ENCODE measurements at regions of chr1 and their contacts with region 1.

Region 1: GRCh38 chr1:161864577-161864976 is 98.5 kb downstream of the ATF6 start:
- DNase-seq: peak in 4 of 14 experiments; percentile 11 to 32 (median 25)
- ATAC-seq: peak; percentile 37
- H3K4me3 ChIP-seq: no peak overlapping the region
- H3K4me3 Mint-ChIP-seq: no peak overlapping the region
- H3K27ac ChIP-seq: no peak overlapping the region
- H3K27ac Mint-ChIP-seq: no peak overlapping the region
- H3K4me1 ChIP-seq: no peaks in the 10 kb centered on the region
- H3K4me1 Mint-ChIP-seq: peaks cover 6% of the 10 kb centered on the region
- H3K27me3 ChIP-seq: no peaks in the 10 kb centered on the region
- H3K27me3 Mint-ChIP-seq: no peaks in the 10 kb centered on the region
- CTCF ChIP-seq: peak; percentile 25

Region 2: DNA sequence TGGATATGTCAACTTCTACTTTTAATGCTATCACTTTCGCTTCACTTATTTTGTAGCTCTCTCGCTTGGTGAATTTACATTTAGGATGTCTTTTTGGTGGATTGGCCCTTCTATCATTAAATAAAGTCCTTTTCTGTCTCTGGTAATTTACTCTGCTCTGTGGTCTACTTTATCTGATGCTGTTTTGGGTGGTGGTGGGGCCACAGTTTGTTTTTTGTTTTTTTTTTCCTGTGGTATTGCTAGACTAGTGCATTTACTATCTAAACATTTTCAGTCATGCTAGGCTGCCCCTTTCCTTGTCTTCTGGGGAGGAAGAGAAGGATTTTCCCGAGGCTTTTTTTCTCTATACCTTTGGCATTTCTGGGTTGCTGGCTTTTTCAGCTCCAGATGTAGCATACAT is 175.6 kb before region 1 on chr1:
- CTCF ChIA-PET with region 1: no interaction called
- POLR2A ChIA-PET with region 1: no interaction called
- intact Hi-C with region 1: no loop called
- DNase-seq: no peak
- ATAC-seq: no peak
- H3K4me3 ChIP-seq: no peak overlapping the region
- H3K4me3 Mint-ChIP-seq: no peak overlapping the region
- H3K27ac ChIP-seq: no peak overlapping the region
- H3K27ac Mint-ChIP-seq: no peak overlapping the region
- H3K4me1 ChIP-seq: no peaks in the 10 kb centered on the region
- H3K4me1 Mint-ChIP-seq: no peaks in the 10 kb centered on the region
- H3K27me3 ChIP-seq: peaks cover 12 to 18% of the 10 kb centered on the region in 2 experiments
- H3K27me3 Mint-ChIP-seq: peaks cover 34% of the 10 kb centered on the region
- CTCF ChIP-seq: no peak

Region 3: DNA sequence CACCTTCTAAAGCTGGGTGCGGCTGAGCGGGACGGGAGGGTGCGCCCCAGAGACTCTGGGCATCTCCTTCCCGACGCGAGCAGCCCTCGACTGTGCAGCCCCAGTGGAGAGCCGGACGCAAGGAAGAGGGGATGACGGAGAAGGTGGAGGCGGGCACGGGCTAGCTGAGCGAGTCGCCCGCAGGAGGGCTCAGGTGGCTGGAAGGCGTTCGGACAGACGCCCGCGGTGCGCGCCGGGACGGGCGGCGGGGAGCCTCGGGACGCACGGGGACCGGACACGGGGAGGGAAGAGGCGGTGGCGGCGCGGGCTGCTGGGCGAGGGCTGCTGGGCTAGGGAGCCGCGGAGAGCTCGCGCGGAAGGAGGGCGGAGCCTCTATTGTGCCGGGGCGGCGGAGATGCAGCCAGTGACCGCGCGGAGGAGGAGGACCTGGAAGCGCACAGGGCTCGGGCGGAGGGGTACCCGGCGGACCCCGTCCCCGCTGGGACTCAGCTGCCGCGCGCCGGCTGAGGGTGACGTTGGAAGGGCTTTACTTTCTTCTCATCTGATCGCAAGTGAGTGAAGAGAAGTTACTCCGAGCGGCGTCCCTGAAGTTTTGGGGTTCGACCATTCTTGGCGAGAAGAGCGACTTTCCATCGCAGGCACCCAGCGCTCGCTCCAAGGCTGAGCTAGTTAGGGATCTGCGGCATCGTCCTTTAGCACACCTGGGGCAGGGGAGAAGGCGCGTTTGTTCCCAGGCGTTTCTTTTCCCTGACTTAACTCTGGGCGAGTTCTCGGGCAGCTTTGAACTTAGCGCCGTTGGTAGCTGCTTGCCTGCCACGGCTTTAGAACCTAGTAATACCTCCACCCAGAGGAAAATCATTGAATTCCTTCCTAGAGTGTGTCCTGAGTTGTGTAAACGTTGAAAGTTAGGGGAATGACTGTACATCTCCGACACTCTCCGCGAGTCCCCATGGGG is 159.2 kb after region 1 on chr1 and contains the start of gene OLFML2B:
- CTCF ChIA-PET with region 1: no interaction called
- POLR2A ChIA-PET with region 1: interaction called, 10 read pairs
- intact Hi-C with region 1: loop called in 1 of 2 experiments (anchors 1 kb)
- DNase-seq: peak in 13 of 14 experiments; percentile 14 to 63 (median 38)
- ATAC-seq: peak; percentile 89
- H3K4me3 ChIP-seq: peak within 1 kb of the TSS; percentile 68
- H3K4me3 Mint-ChIP-seq: peak within 1 kb of the TSS; percentile 95
- H3K27ac ChIP-seq: no peak within 1 kb of the TSS
- H3K27ac Mint-ChIP-seq: no peak within 1 kb of the TSS
- H3K4me1 ChIP-seq: peaks cover 13% of the 10 kb centered on the region
- H3K4me1 Mint-ChIP-seq: peaks cover 7% of the 10 kb centered on the region
- H3K27me3 ChIP-seq: peaks cover 7 to 22% of the 10 kb centered on the region in 2 experiments
- H3K27me3 Mint-ChIP-seq: peaks cover 42% of the 10 kb centered on the region
- CTCF ChIP-seq: no peak
- total RNA-seq, gene OLFML2B: 0.08 TPM in 1 of 2 experiments, not detected in the other

Region 4: GRCh38 chr1:162040681-162041080 is 176.1 kb after region 1 on chr1:
- CTCF ChIA-PET with region 1: interaction called, 12 read pairs
- POLR2A ChIA-PET with region 1: no interaction called
- intact Hi-C with region 1: loop called (anchors 1 kb)
- DNase-seq: no peak
- ATAC-seq: no peak
- H3K4me3 ChIP-seq: no peak overlapping the region
- H3K4me3 Mint-ChIP-seq: no peak overlapping the region
- H3K27ac ChIP-seq: no peak overlapping the region
- H3K27ac Mint-ChIP-seq: no peak overlapping the region
- H3K4me1 ChIP-seq: peaks cover 5% of the 10 kb centered on the region
- H3K4me1 Mint-ChIP-seq: no peaks in the 10 kb centered on the region
- H3K27me3 ChIP-seq: peaks cover 0 to 11% of the 10 kb centered on the region in 2 experiments
- H3K27me3 Mint-ChIP-seq: peaks cover 5% of the 10 kb centered on the region
- CTCF ChIP-seq: no peak

Measured in CD4-positive, alpha-beta T cell (primary cell).